Mammary epithelial cell (primary cell): ENCODE measurements at regions of chr11 and their contacts with region 1.

Region 1: GRCh38 chr11:72179804-72180396 is 12.0 kb upstream of the FOLR1 start:
- DNase-seq: no peak
- H3K4me3 ChIP-seq: no peak overlapping the region
- H3K27ac ChIP-seq: no peak overlapping the region
- H3K4me1 ChIP-seq: peaks cover 29% of the 10 kb centered on the region
- H3K27me3 ChIP-seq: no peaks in the 10 kb centered on the region
- CTCF ChIP-seq: no peak

Region 2: DNA sequence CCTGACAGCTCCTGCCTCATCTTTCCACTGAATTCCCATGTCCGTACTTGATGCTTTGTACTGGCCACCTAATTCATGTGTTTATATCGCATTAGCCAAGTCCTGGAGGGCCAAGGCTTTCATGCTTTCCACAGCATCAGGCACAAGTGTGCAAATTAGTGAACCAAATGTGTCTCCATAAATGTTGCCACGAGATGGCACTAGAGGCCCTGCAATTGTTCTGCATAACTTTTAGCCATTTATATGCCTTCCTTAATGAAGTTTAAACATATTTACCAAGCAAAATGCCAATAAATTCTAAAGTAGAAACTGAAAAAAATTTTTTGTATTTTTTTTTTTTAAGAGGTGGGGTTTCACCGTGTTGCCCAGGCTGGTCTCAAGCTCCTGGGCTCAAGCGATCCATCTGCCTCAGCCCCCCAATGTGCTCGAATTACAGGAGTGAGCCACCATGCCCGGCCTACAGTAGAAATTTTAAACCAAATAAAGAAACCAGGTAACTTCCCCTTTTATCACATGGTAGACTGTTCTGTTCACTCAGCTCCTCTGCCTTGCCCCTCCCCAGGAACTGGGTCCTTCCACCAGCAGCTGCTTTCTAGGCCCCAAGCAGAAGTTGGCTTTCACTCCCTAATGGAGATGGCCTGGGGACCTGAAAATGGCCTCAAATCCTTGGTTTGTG is 202.0 kb before region 1 on chr11:
- CTCF ChIA-PET with region 1: no interaction called
- dilution Hi-C with region 1: no loop called
- in situ Hi-C with region 1: no loop called
- intact Hi-C with region 1: loop called (anchors 1 kb)
- DNase-seq: peak; percentile 33
- H3K4me3 ChIP-seq: no peak overlapping the region
- H3K27ac ChIP-seq: no peak overlapping the region
- H3K4me1 ChIP-seq: no peaks in the 10 kb centered on the region
- H3K27me3 ChIP-seq: no peaks in the 10 kb centered on the region
- CTCF ChIP-seq: peak; percentile 67 to 79

Region 3: GRCh38 chr11:72030472-72031045 is 149.3 kb before region 1 on chr11:
- CTCF ChIA-PET with region 1: interaction called, 12 read pairs
- dilution Hi-C with region 1: no loop called
- in situ Hi-C with region 1: no loop called
- intact Hi-C with region 1: loop called (anchors 1 kb)
- DNase-seq: no peak
- H3K4me3 ChIP-seq: no peak overlapping the region
- H3K27ac ChIP-seq: no peak overlapping the region
- H3K4me1 ChIP-seq: peaks cover under 1% of the 10 kb centered on the region
- H3K27me3 ChIP-seq: no peaks in the 10 kb centered on the region
- CTCF ChIP-seq: no peak

Region 4: DNA sequence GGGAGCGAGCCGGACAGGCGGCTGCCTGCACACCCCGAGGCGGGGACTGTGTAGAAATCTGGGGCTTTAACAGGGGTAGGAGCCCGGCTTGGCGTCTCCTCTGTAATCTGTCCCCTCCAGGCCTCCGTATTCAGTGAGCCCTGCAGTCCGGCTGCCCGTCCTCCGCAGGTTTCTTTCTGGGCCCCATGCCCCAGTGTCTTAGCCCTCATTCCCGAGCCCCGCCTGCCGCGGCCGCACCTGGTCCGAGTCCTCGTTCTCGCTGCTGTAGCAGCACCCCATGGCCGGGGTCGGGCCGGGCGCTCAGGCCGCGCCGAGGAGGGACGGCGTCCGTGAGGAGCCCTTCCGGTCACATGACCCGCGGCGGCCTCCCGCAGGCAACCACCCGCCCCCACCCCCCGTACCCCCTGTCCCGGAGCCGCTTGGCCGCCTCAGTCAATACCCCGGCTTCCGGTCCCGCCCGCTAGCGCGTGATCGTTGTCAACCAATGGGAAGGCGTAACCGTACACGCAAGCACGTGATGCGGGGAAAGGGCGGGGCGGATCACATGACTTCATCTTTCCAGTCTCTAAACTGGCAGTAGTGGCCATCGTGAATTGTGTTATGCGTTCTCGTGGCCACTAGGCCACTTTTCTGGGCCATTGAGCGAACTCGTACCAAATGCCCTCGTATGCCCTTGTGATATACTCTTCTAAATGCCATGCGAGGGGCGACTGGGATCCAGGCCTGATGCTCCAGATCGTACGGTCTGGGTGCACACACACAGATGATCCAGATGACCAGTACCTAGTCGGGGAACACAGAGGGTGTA is 76.8 kb before region 1 on chr11 and contains the start of gene LAMTOR1:
- CTCF ChIA-PET with region 1: no interaction called
- dilution Hi-C with region 1: no loop called
- in situ Hi-C with region 1: no loop called
- intact Hi-C with region 1: loop called (anchors 2 kb)
- DNase-seq: peak; percentile 95
- H3K4me3 ChIP-seq: peak within 1 kb of the TSS; percentile 80 to 94 (median 84)
- H3K27ac ChIP-seq: peak within 1 kb of the TSS; percentile 86
- H3K4me1 ChIP-seq: peaks cover 31% of the 10 kb centered on the region
- H3K27me3 ChIP-seq: no peaks in the 10 kb centered on the region
- CTCF ChIP-seq: peak; percentile 35 to 40
- total RNA-seq, gene LAMTOR1: 105 to 183 TPM

Region 5: GRCh38 chr11:72119198-72119597 is 60.7 kb before region 1 on chr11:
- CTCF ChIA-PET with region 1: no interaction called
- dilution Hi-C with region 1: no loop called
- in situ Hi-C with region 1: no loop called
- intact Hi-C with region 1: no loop called
- DNase-seq: no peak
- H3K4me3 ChIP-seq: no peak overlapping the region
- H3K27ac ChIP-seq: no peak overlapping the region
- H3K4me1 ChIP-seq: peaks cover 16% of the 10 kb centered on the region
- H3K27me3 ChIP-seq: no peaks in the 10 kb centered on the region
- CTCF ChIP-seq: no peak

Region 6: GRCh38 chr11:72141066-72141465 is 38.8 kb before region 1 on chr11:
- CTCF ChIA-PET with region 1: no interaction called
- dilution Hi-C with region 1: no loop called
- in situ Hi-C with region 1: no loop called
- intact Hi-C with region 1: loop called (anchors 1 kb)
- DNase-seq: peak; percentile 92
- H3K4me3 ChIP-seq: no peak overlapping the region
- H3K27ac ChIP-seq: peak overlapping the region; percentile 94
- H3K4me1 ChIP-seq: peaks cover 49% of the 10 kb centered on the region
- H3K27me3 ChIP-seq: no peaks in the 10 kb centered on the region
- CTCF ChIP-seq: no peak

Region 7: DNA sequence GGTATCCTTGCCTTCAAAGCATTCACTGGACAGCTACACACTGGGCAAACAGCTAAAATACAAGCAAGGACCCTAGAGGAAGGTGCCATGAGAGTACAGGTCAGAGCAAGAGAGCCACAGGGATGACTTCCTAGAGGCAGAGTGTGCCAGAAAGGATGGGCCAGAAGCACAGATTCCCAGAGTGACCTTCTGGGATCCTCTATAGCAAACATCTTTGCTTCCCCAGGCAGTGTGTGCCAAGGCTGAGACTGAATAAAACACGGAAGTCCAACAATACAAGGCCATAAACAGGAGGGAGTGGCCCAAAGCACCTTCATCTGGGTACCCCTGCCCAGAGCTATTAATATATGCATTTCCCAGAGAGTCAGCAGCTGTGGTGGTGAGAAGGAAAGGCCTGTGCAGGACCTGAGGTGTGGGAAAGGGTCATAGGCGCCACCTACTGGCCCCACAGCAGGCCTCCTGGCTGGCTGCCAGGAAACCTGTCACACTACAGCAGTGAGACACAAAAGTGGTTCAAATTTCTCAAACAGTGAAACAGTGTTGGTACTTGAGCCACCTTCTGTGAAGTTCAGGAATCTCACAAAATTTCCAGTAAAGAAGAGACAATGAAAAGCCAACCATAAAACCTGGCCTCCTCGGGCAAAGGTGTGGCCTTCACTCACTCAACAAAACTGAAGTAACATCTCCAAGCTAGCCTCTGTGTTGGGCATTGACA is 234.2 kb after region 1 on chr11:
- CTCF ChIA-PET with region 1: interaction called, 3 read pairs
- dilution Hi-C with region 1: no loop called
- in situ Hi-C with region 1: no loop called
- intact Hi-C with region 1: loop called (anchors 5 kb)
- DNase-seq: peak; percentile 62
- H3K4me3 ChIP-seq: no peak overlapping the region
- H3K27ac ChIP-seq: no peak overlapping the region
- H3K4me1 ChIP-seq: no peaks in the 10 kb centered on the region
- H3K27me3 ChIP-seq: no peaks in the 10 kb centered on the region
- CTCF ChIP-seq: peak; percentile 79 to 94

Region 8: DNA sequence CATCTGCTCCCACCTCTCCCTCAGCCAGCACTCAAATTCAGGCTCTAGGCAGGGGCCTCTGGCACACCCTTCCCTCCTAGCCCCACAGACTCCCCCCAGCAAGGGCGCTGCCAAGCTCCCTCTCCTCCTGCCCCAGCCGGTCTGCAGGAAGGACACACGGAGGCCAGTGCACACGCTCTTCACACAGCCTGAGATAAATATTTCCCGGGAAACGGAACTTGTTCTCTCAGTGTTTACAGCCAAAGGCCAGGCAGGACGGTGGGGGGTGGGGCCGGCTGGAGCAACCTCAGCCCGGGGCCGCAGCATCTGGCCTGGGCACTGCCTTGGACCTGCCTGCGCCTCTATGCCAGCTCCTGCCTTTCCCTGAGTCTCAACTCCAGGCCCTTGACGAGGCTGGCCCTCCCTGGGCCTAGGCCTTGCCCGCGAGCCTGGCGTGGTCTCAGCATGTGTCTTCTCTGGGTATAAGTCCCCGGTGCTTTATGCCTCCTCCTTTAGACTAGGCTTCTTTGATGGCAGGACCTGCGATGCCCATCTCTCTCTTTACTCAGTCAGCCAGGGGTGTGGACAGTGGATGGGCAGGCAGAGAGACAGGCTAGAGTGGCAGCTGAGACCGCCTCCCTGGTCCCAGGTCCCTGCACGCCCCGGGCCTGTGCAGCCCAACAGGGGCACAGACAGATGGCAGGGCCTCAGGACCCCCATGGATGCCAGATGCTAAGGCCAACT is 446.0 kb after region 1 on chr11:
- CTCF ChIA-PET with region 1: no interaction called
- dilution Hi-C with region 1: no loop called
- in situ Hi-C with region 1: no loop called
- intact Hi-C with region 1: no loop called
- DNase-seq: no peak
- H3K4me3 ChIP-seq: no peak overlapping the region
- H3K27ac ChIP-seq: no peak overlapping the region
- H3K4me1 ChIP-seq: no peaks in the 10 kb centered on the region
- H3K27me3 ChIP-seq: no peaks in the 10 kb centered on the region
- CTCF ChIP-seq: no peak